ENCODE measurements at regions of chr19 and their contacts with region 1.

Region 1: GRCh38 chr19:17405250-17406038 is at the start of gene BST2:
- DNase-seq: peak; percentile 71
- H3K4me3 Mint-ChIP-seq: peak within 1 kb of the TSS; percentile 93
- H3K27ac Mint-ChIP-seq: peak within 1 kb of the TSS; percentile 97
- H3K4me1 Mint-ChIP-seq: peaks cover 26% of the 10 kb centered on the region
- H3K27me3 Mint-ChIP-seq: no peaks in the 10 kb centered on the region
- total RNA-seq, gene BST2: 156 to 164 TPM

Region 2: GRCh38 chr19:17419621-17420466 is 14.4 kb after region 1 on chr19 and contains the start of gene MVB12A:
- CTCF ChIA-PET with region 1: interaction called, 18 read pairs
- POLR2A ChIA-PET with region 1: interaction called, 20 read pairs
- intact Hi-C with region 1: loop called (anchors 1 kb)
- DNase-seq: peak; percentile 98
- H3K4me3 Mint-ChIP-seq: peak within 1 kb of the TSS; percentile 86
- H3K27ac Mint-ChIP-seq: peak within 1 kb of the TSS; percentile 87
- H3K4me1 Mint-ChIP-seq: peaks cover 19% of the 10 kb centered on the region
- H3K27me3 Mint-ChIP-seq: no peaks in the 10 kb centered on the region
- total RNA-seq, gene MVB12A: 36.5 to 42.4 TPM

Measured in activated CD4-positive, alpha-beta memory T cell treated with anti-CD3 and anti-CD28 coated beads for 36 hours (primary cell).